HEK293 (cell line): ENCODE measurements at regions of chr2 and their contacts with region 1.

Region 1: GRCh38 chr2:172465417-172466334 is 38.3 kb downstream of the ITGA6 start:
- H3K4me3 ChIP-seq: no peak overlapping the region
- H3K27ac ChIP-seq: no peak overlapping the region
- H3K4me1 ChIP-seq: no peaks in the 10 kb centered on the region
- CTCF ChIP-seq: peak; percentile 75; the same call in 1 of the 2 replicates

Region 2: DNA sequence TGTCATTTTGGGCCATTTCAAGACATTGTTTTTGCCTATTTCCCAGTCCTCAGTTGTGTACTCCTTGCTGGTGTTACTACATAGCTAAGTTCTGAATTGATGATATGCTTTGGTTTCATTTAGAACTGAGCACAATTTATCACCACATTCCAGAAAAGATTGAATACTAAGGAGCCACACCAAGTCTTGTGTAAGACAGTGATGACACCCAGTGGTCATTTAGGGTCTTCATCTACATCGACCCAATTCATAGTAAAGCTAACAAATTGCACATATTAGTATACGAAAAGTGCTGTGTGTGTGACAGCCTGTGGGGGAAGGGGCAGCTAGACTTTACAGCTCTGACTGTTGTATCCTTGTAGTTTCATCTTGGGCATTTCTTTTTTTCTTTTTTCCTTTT is 352.1 kb before region 1 on chr2:
- CTCF ChIA-PET with region 1: interaction called, 10 read pairs
- POLR2A ChIA-PET with region 1: no interaction called
- H3K4me3 ChIP-seq: no peak overlapping the region
- H3K27ac ChIP-seq: no peak overlapping the region
- H3K4me1 ChIP-seq: no peaks in the 10 kb centered on the region
- CTCF ChIP-seq: peak; percentile 79

Region 3: GRCh38 chr2:172172513-172173173 is 293.0 kb before region 1 on chr2:
- CTCF ChIA-PET with region 1: interaction called, 213 read pairs
- POLR2A ChIA-PET with region 1: interaction called, 4 read pairs
- H3K4me3 ChIP-seq: peak overlapping the region; percentile 42
- H3K27ac ChIP-seq: no peak overlapping the region
- H3K4me1 ChIP-seq: no peaks in the 10 kb centered on the region
- CTCF ChIP-seq: peak; percentile 92

Region 4: DNA sequence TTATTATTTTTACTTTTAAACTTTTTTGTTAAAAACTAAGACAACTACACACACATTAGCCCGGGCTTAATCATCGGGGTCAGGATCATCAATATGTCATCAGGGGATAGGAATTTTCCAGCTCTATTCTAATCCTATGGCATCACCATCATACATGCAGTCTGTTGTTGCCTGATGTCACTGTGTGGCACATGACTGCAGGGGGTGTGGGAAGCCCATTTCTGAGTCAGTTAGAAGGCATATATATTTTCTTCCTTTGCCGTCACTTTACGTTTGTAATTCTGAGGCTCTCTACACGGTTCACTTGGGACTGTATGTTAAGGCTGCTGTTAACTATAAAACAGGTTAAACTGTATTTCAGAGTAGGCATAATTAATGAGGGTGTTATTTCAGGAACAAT is 182.7 kb before region 1 on chr2:
- CTCF ChIA-PET with region 1: interaction called, 10 read pairs
- POLR2A ChIA-PET with region 1: no interaction called
- H3K4me3 ChIP-seq: no peak overlapping the region
- H3K27ac ChIP-seq: no peak overlapping the region
- H3K4me1 ChIP-seq: peaks cover 6% of the 10 kb centered on the region; the same call in 1 of the 2 replicates
- CTCF ChIP-seq: no peak

Region 5: GRCh38 chr2:172427256-172427989 is 38.3 kb before region 1 on chr2 and contains the start of gene ITGA6:
- CTCF ChIA-PET with region 1: interaction called, 60 read pairs
- POLR2A ChIA-PET with region 1: interaction called, 11 read pairs
- H3K4me3 ChIP-seq: peak within 1 kb of the TSS; percentile 77
- H3K27ac ChIP-seq: peak within 1 kb of the TSS; percentile 88
- H3K4me1 ChIP-seq: peaks cover 8% of the 10 kb centered on the region; the same call in 1 of the 2 replicates
- CTCF ChIP-seq: peak; percentile 56; the same call in 1 of the 2 replicates

Region 6: GRCh38 chr2:172442072-172442895 is 23.4 kb before region 1 on chr2:
- CTCF ChIA-PET with region 1: interaction called, 43 read pairs
- POLR2A ChIA-PET with region 1: no interaction called
- H3K4me3 ChIP-seq: no peak overlapping the region
- H3K27ac ChIP-seq: no peak overlapping the region
- H3K4me1 ChIP-seq: peaks cover 27% of the 10 kb centered on the region
- CTCF ChIP-seq: no peak

Region 7: DNA sequence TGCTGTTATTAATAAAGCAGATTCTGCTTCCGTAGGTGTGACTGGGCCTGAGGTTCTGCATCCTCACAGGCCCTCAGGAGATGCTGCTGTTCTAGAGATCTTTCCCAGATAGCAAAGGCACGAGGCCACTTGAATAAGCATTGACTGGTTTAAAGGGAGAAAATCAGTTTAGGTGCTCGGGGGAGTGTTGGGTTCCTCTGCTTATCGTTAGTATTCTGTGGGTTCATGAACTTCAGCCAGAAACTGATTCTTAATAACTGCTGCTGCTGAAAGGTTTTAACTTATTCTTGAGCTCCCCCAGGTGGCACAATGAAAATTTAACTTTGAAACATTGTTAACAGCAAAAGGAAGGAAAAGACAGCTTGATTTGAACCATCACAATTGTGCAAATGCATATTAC is 18.6 kb after region 1 on chr2:
- CTCF ChIA-PET with region 1: interaction called, 11 read pairs
- POLR2A ChIA-PET with region 1: no interaction called
- H3K4me3 ChIP-seq: no peak overlapping the region
- H3K27ac ChIP-seq: no peak overlapping the region
- H3K4me1 ChIP-seq: no peaks in the 10 kb centered on the region
- CTCF ChIP-seq: no peak; the same call in 1 of the 2 replicates